ENCODE measurements at regions of chr18 and their contacts with region 1.

Region 1: DNA sequence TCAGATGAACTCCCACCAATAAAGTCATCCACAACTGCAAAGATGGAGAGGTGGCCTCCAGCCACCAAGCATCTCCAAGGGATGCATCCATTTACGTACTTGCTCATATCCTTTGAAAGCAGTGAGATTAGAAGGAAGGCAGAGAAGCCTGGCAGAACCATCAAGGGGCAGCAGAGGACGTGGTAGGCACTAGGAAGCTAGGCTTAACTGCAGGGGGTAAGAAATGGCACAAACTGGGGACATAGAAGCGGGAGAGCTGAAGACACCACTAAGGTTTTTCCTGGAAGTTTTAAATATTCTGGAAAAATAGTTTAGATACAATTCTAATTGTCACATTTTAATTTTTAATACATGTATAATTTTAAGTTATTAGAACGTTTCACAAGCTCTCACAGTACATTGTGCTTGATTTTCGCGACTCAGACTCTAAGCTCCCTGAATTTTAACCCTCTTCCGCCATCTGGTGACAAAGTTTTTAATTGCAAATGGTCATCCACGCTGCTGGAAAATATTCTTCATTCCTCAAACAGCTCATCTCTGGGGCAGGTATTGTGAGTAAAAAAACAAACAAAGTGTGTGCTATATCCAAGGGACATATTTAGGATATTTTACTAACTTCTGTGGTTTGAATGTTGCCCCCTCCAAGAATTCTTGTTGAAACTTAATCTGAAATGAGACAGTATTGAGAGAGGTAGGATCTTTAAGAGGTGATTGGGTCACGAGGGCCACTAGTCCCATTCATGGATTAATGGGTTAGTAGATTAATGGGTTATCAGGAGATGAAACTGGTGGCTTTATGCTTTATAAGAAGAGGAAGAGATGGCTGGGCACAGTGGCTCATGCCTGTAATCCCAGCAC is 1.6 kb upstream of the PSTPIP2 start:
- DNase-seq: peak in 8 of 9 donors; percentile 44 to 83 (median 72)
- ATAC-seq: peak; percentile 61
- H3K4me3 ChIP-seq: peak overlapping the region; percentile 23
- H3K4me3 Mint-ChIP-seq: peak overlapping the region in 9 of 10 donors; percentile 57 to 90 (median 85)
- H3K27ac ChIP-seq: no peak overlapping the region
- H3K27ac Mint-ChIP-seq: peak overlapping the region in 4 of 9 donors; percentile 19 to 77 (median 62)
- H3K4me1 ChIP-seq: peaks cover 13 to 25% of the 10 kb centered on the region in 2 donors
- H3K4me1 Mint-ChIP-seq: peaks cover 23 to 41% (median 38%) of the 10 kb centered on the region in 7 donors
- H3K27me3 ChIP-seq: no peaks in the 10 kb centered on the region
- H3K27me3 Mint-ChIP-seq: no peaks in the 10 kb centered on the region

Region 2: DNA sequence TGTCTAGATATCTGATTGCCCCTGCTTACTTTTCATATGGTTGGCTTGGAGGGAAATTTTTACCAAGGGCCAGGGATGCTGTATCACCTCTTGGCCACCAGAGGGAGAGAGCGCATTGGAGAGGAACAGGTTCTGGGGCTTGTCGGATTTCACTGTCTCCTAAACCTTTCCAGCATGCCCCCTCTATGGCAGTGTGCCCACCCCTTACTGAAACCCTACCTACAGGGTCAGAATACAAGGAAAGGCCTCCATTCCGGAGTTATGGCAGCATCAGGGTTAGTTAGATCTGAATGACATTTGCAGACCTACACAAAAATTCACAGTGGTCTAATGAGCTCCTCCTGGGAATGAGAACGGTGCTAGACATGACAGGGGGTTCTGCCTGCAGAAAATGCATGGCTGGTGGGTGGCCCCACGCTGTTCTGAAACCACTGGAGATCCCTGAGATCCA is 452.6 kb before region 1 on chr18:
- CTCF ChIA-PET with region 1: interaction called, 4 read pairs
- POLR2A ChIA-PET with region 1: no interaction called
- intact Hi-C with region 1: loop called (anchors 1 kb)
- DNase-seq: peak in 8 of 9 donors; percentile 8 to 61 (median 40)
- ATAC-seq: peak; percentile 76
- H3K4me3 ChIP-seq: no peak overlapping the region
- H3K4me3 Mint-ChIP-seq: no peak overlapping the region
- H3K27ac ChIP-seq: no peak overlapping the region
- H3K27ac Mint-ChIP-seq: no peak overlapping the region
- H3K4me1 ChIP-seq: no peaks in the 10 kb centered on the region
- H3K4me1 Mint-ChIP-seq: no peaks in the 10 kb centered on the region
- H3K27me3 ChIP-seq: no peaks in the 10 kb centered on the region
- H3K27me3 Mint-ChIP-seq: peaks cover 0 to 27% (median 10%) of the 10 kb centered on the region in 5 donors

Region 3: GRCh38 chr18:45722899-45723298 is 350.8 kb before region 1 on chr18:
- CTCF ChIA-PET with region 1: interaction called, 3 read pairs
- POLR2A ChIA-PET with region 1: no interaction called
- intact Hi-C with region 1: loop called (anchors 1 kb)
- DNase-seq: peak in 8 of 9 donors; percentile 7 to 74 (median 40)
- ATAC-seq: peak; percentile 90
- H3K4me3 ChIP-seq: no peak overlapping the region
- H3K4me3 Mint-ChIP-seq: no peak overlapping the region
- H3K27ac ChIP-seq: no peak overlapping the region
- H3K27ac Mint-ChIP-seq: no peak overlapping the region
- H3K4me1 ChIP-seq: no peaks in the 10 kb centered on the region
- H3K4me1 Mint-ChIP-seq: peaks cover 0 to 15% (median 0%) of the 10 kb centered on the region in 7 donors
- H3K27me3 ChIP-seq: no peaks in the 10 kb centered on the region
- H3K27me3 Mint-ChIP-seq: peaks cover 0 to 35% (median 0%) of the 10 kb centered on the region in 5 donors

Region 4: DNA sequence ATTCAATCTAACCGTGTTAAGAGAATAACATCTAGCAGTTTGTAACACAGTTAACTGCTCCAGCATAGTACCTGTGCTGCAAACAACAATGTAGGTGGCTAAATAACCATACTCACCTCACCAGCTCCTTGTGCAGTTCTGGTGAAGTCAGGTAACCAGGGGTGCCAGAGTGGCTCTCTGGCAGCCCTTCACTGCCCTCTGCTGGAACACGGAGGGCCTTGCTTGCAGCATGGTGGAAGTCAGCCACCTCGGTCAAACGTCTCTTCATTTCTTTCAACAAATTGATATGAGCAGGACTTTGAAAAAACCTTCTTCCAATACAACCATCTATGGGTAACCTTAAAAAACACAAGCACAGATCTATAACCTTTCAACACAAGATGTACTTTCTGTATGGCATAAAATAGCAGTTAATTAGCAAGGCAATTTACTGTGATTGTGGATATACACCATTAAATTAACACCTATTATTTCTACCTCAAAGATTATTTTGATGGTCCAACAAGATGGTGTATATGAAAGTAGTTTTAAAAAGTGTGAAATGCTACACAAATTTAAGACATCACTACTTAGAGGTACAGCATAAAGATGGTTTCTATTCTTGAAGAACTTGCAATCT is 163.2 kb before region 1 on chr18:
- CTCF ChIA-PET with region 1: no interaction called
- POLR2A ChIA-PET with region 1: no interaction called
- intact Hi-C with region 1: loop called in 1 of 2 experiments (anchors 1 kb)
- DNase-seq: peak; percentile 16 to 68 (median 57)
- ATAC-seq: peak; percentile 83
- H3K4me3 ChIP-seq: no peak overlapping the region
- H3K4me3 Mint-ChIP-seq: no peak overlapping the region
- H3K27ac ChIP-seq: no peak overlapping the region
- H3K27ac Mint-ChIP-seq: no peak overlapping the region
- H3K4me1 ChIP-seq: no peaks in the 10 kb centered on the region
- H3K4me1 Mint-ChIP-seq: peaks cover 0 to 5% (median 2%) of the 10 kb centered on the region in 7 donors
- H3K27me3 ChIP-seq: no peaks in the 10 kb centered on the region
- H3K27me3 Mint-ChIP-seq: no peaks in the 10 kb centered on the region

Region 5: DNA sequence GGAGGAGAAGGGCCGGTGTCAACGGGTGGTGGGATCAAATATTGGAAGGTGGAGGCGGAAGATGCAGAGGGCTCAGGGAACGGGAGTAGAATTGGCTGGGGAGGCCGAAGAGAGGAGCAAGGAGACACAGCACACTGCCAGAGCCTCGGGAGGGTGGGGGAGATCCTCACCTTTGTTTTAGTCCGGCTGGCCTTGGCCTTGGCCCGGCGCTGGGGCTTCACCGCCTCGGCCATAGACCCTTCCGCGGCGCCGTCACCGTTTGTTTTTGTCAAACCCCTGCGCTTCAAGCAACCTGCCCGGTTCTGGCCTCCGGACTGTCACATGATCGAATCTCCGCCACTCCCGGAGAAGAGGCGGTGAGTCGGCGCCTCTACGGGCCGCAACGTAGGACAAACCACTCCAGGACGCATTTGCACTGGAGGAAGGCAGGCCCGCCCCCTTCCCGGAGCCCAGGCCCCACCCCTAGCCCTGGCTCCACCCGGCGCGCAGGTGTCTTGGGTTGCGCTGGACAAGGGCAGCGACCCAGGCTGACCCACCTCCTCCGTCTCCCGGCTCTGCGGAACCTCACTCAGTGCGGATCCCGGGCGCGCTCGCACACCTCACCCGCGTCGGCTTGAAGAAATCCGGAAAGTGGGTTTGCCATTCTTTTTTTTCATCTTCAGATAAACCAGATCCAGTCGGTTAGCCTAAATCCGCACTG is 106.5 kb before region 1 on chr18 and contains the start of gene EPG5:
- CTCF ChIA-PET with region 1: interaction called, 5 read pairs
- POLR2A ChIA-PET with region 1: interaction called, 4 read pairs
- intact Hi-C with region 1: loop called (anchors 1 kb)
- DNase-seq: peak; percentile 73 to 91 (median 90)
- ATAC-seq: peak; percentile 98
- H3K4me3 ChIP-seq: peak within 1 kb of the TSS; percentile 79
- H3K4me3 Mint-ChIP-seq: peak within 1 kb of the TSS; percentile 94 to 100 (median 97)
- H3K27ac ChIP-seq: peak within 1 kb of the TSS; percentile 86
- H3K27ac Mint-ChIP-seq: peak within 1 kb of the TSS; percentile 84 to 98 (median 97)
- H3K4me1 ChIP-seq: peaks cover 14 to 25% of the 10 kb centered on the region in 2 donors
- H3K4me1 Mint-ChIP-seq: peaks cover 33 to 55% (median 47%) of the 10 kb centered on the region in 7 donors
- H3K27me3 ChIP-seq: no peaks in the 10 kb centered on the region
- H3K27me3 Mint-ChIP-seq: no peaks in the 10 kb centered on the region
- total RNA-seq, gene EPG5: 26.0 to 54.8 (median 44.7) TPM

Region 6: DNA sequence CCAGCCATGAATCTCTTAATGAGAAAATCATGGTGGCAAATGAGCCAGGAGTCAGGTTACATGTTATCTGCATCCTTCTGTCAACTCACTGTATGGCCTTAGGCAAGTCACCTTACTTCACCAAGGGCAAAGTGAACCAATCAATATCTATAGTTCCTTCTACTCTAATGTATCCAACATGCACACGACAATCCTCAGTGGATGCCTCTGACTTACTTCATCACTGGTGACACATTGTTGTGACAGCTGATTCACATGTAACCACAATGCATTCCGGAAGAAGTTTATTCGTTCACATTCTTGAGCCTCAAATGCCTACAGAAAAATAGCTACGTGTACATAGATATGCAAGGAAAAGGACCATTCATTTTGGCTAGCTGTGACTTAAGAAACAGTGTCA is 80.3 kb before region 1 on chr18:
- CTCF ChIA-PET with region 1: interaction called, 7 read pairs
- POLR2A ChIA-PET with region 1: interaction called, 13 read pairs
- intact Hi-C with region 1: loop called in 1 of 2 experiments (anchors 1 kb)
- DNase-seq: no peak
- ATAC-seq: no peak
- H3K4me3 ChIP-seq: no peak overlapping the region
- H3K4me3 Mint-ChIP-seq: no peak overlapping the region
- H3K27ac ChIP-seq: no peak overlapping the region
- H3K27ac Mint-ChIP-seq: no peak overlapping the region
- H3K4me1 ChIP-seq: peaks cover 0 to 19% of the 10 kb centered on the region in 2 donors
- H3K4me1 Mint-ChIP-seq: peaks cover 9 to 29% (median 25%) of the 10 kb centered on the region in 7 donors
- H3K27me3 ChIP-seq: no peaks in the 10 kb centered on the region
- H3K27me3 Mint-ChIP-seq: no peaks in the 10 kb centered on the region

Region 7: DNA sequence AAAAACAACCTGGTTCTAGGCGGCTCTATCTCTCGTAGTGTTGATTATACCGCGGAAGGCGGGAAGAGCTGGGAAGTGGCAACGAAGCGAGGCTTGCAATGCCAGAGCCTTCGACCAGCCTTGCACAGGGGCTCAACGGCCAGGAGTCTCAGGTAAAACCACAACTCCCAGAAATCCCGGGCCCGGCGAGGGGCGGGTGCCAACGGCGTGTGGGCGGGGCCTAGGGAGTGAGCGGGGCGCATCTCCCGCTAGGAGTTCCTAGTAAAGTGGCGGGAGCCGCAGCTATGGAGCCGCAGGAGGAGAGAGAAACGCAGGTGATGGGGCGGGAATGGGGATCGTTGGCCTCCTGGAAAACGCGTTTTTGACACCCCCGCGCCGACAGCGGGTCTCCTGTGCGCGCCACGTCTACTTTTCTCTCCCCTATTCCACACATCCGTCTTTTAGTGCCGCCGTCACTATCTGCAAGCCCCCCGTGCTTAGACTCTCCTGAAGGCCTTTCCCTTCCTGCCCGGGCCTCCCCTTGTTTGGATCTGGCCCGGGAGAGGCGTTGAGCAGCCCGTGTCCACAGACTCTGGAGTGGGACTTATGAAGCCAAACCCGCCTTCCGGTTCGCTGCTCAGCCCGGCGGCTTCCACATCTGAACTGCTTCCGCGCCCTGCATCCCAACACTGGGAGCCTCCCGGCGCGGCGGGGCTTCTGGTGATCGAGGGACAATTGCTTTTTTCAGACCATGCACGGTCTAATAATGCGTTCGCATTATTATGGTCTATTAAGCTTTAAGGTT is 30.6 kb after region 1 on chr18 and contains the start of gene HAUS1:
- CTCF ChIA-PET with region 1: no interaction called
- POLR2A ChIA-PET with region 1: no interaction called
- intact Hi-C with region 1: loop called in 1 of 2 experiments (anchors 2 kb)
- DNase-seq: peak; percentile 62 to 87 (median 69)
- ATAC-seq: peak; percentile 98
- H3K4me3 ChIP-seq: peak within 1 kb of the TSS; percentile 89
- H3K4me3 Mint-ChIP-seq: peak within 1 kb of the TSS; percentile 93 to 99 (median 98)
- H3K27ac ChIP-seq: peak within 1 kb of the TSS; percentile 80
- H3K27ac Mint-ChIP-seq: peak within 1 kb of the TSS; percentile 73 to 97 (median 91)
- H3K4me1 ChIP-seq: peaks cover 5% of the 10 kb centered on the region in 2 donors
- H3K4me1 Mint-ChIP-seq: peaks cover 11 to 37% (median 26%) of the 10 kb centered on the region in 7 donors
- H3K27me3 ChIP-seq: no peaks in the 10 kb centered on the region
- H3K27me3 Mint-ChIP-seq: no peaks in the 10 kb centered on the region
- total RNA-seq, gene HAUS1: 10.4 to 47.2 (median 15.2) TPM

Region 8: DNA sequence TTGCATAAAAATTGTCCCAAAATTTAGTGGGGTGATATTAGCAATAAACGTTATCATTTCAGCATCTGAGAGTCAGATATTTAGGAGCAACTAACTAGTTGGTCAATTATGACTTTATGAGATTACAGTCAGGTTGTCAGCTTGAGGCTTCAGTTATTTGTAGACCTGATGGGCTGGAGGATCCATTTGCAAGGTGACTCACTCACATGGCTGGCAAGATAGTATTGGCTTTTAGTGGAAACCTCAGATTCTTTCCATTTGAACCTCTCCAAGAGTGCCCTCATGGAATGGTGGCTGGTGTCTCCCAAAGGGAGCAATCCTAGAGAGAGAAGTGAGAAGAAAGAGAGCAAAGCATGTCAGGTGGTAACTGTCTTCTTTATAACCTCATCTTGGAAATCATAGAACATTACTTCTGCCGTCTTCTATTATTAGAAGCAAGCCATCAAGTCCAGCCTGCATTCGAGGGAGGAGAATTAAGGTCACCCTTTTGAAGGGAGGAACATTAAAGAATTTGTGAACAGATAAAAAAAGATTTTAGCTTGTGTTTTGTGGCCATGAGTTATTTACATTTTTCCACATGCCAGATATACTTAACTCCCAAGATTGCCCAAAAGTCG is 123.0 kb after region 1 on chr18:
- CTCF ChIA-PET with region 1: no interaction called
- POLR2A ChIA-PET with region 1: no interaction called
- intact Hi-C with region 1: no loop called
- DNase-seq: no peak
- ATAC-seq: no peak
- H3K4me3 ChIP-seq: no peak overlapping the region
- H3K4me3 Mint-ChIP-seq: no peak overlapping the region
- H3K27ac ChIP-seq: no peak overlapping the region
- H3K27ac Mint-ChIP-seq: peak overlapping the region in 1 of 9 donors; percentile 72
- H3K4me1 ChIP-seq: peaks cover 0 to 4% of the 10 kb centered on the region in 2 donors
- H3K4me1 Mint-ChIP-seq: peaks cover 22 to 60% (median 54%) of the 10 kb centered on the region in 7 donors
- H3K27me3 ChIP-seq: no peaks in the 10 kb centered on the region
- H3K27me3 Mint-ChIP-seq: no peaks in the 10 kb centered on the region

Measured in naive thymus-derived CD4-positive, alpha-beta T cell (primary cell).